ENCODE measurements at regions of chr7 and their contacts with region 1.

Region 1: GRCh38 chr7:158353606-158354570 is 233.7 kb downstream of the PTPRN2 start:
- DNase-seq: no peak
- H3K4me3 ChIP-seq: no peak overlapping the region
- H3K27ac ChIP-seq: no peak overlapping the region
- H3K4me1 ChIP-seq: no peaks in the 10 kb centered on the region
- H3K27me3 ChIP-seq: no peaks in the 10 kb centered on the region
- CTCF ChIP-seq: peak; percentile 22 to 44

Region 2: GRCh38 chr7:157250605-157251228 is 1103.2 kb before region 1 on chr7:
- CTCF ChIA-PET with region 1: no interaction called
- dilution Hi-C with region 1: no loop called
- in situ Hi-C with region 1: no loop called
- intact Hi-C with region 1: loop called (anchors 10 kb)
- DNase-seq: peak; percentile 51
- H3K4me3 ChIP-seq: no peak overlapping the region
- H3K27ac ChIP-seq: no peak overlapping the region
- H3K4me1 ChIP-seq: no peaks in the 10 kb centered on the region
- H3K27me3 ChIP-seq: no peaks in the 10 kb centered on the region
- CTCF ChIP-seq: peak; percentile 81 to 85

Region 3: GRCh38 chr7:157397731-157398691 is 955.9 kb before region 1 on chr7:
- CTCF ChIA-PET with region 1: no interaction called
- dilution Hi-C with region 1: no loop called
- in situ Hi-C with region 1: no loop called
- intact Hi-C with region 1: loop called (anchors 1 kb)
- DNase-seq: peak; percentile 22
- H3K4me3 ChIP-seq: no peak overlapping the region
- H3K27ac ChIP-seq: no peak overlapping the region
- H3K4me1 ChIP-seq: peaks cover 2% of the 10 kb centered on the region
- H3K27me3 ChIP-seq: no peaks in the 10 kb centered on the region
- CTCF ChIP-seq: peak; percentile 22 to 41

Region 4: GRCh38 chr7:157432957-157433576 is 920.8 kb before region 1 on chr7:
- CTCF ChIA-PET with region 1: no interaction called
- dilution Hi-C with region 1: no loop called
- in situ Hi-C with region 1: no loop called
- intact Hi-C with region 1: loop called (anchors 1 kb)
- DNase-seq: no peak
- H3K4me3 ChIP-seq: peak overlapping the region; percentile 2 to 24 (median 6)
- H3K27ac ChIP-seq: no peak overlapping the region
- H3K4me1 ChIP-seq: no peaks in the 10 kb centered on the region
- H3K27me3 ChIP-seq: no peaks in the 10 kb centered on the region
- CTCF ChIP-seq: peak; percentile 62 to 65

Region 5: GRCh38 chr7:158407581-158408317 is 53.9 kb after region 1 on chr7:
- CTCF ChIA-PET with region 1: no interaction called
- dilution Hi-C with region 1: no loop called
- in situ Hi-C with region 1: no loop called
- intact Hi-C with region 1: loop called (anchors 1 kb)
- DNase-seq: peak; percentile 11
- H3K4me3 ChIP-seq: no peak overlapping the region
- H3K27ac ChIP-seq: no peak overlapping the region
- H3K4me1 ChIP-seq: no peaks in the 10 kb centered on the region
- H3K27me3 ChIP-seq: no peaks in the 10 kb centered on the region
- CTCF ChIP-seq: peak; percentile 23 to 40

Region 6: GRCh38 chr7:158684329-158684728 is 330.4 kb after region 1 on chr7:
- CTCF ChIA-PET with region 1: no interaction called
- dilution Hi-C with region 1: no loop called
- in situ Hi-C with region 1: no loop called
- intact Hi-C with region 1: no loop called
- DNase-seq: no peak
- H3K4me3 ChIP-seq: no peak overlapping the region
- H3K27ac ChIP-seq: no peak overlapping the region
- H3K4me1 ChIP-seq: no peaks in the 10 kb centered on the region
- H3K27me3 ChIP-seq: no peaks in the 10 kb centered on the region
- CTCF ChIP-seq: no peak